Lower lobe of right lung (tissue), 2 donors: ENCODE measurements at regions of chr5 and their contacts with region 1.

Region 1: GRCh38 chr5:140639148-140639979 is at the start of gene TMCO6:
- DNase-seq: peak; percentile 99
- ATAC-seq: peak; percentile 99
- H3K4me3 ChIP-seq: peak within 1 kb of the TSS; percentile 91
- H3K27ac ChIP-seq: peak within 1 kb of the TSS; percentile 84
- H3K4me1 ChIP-seq: peaks cover 33% of the 10 kb centered on the region
- H3K27me3 ChIP-seq: no peaks in the 10 kb centered on the region
- CTCF ChIP-seq: peak; percentile 72
- total RNA-seq, gene TMCO6: 12.3 TPM

Region 2: GRCh38 chr5:140564196-140565023 is 75.0 kb before region 1 on chr5 and contains the starts of genes APBB3 and SLC35A4:
- intact Hi-C with region 1: loop called (anchors 10 kb)
- DNase-seq: peak; percentile 97
- ATAC-seq: peak; percentile 94 to 96
- H3K4me3 ChIP-seq: peak within 1 kb of the TSS; percentile 72
- H3K27ac ChIP-seq: peak within 1 kb of the TSS; percentile 96
- H3K4me1 ChIP-seq: peaks cover 67% of the 10 kb centered on the region
- H3K27me3 ChIP-seq: no peaks in the 10 kb centered on the region
- CTCF ChIP-seq: no peak
- total RNA-seq, gene APBB3: 25.1 TPM
- total RNA-seq, gene SLC35A4: 71.8 TPM

Region 3: GRCh38 chr5:140725799-140726471 is 86.6 kb after region 1 on chr5:
- intact Hi-C with region 1: no loop called
- DNase-seq: no peak
- ATAC-seq: peak; percentile 69 to 71
- H3K4me3 ChIP-seq: peak overlapping the region; percentile 10
- H3K27ac ChIP-seq: no peak overlapping the region
- H3K4me1 ChIP-seq: no peaks in the 10 kb centered on the region
- H3K27me3 ChIP-seq: peaks cover 9% of the 10 kb centered on the region
- CTCF ChIP-seq: no peak